PC-9 (cell line): ENCODE measurements at regions of chr2 and their contacts with region 1.

Region 1: GRCh38 chr2:172131713-172132555 is 29.2 kb upstream of the DLX2 start:
- DNase-seq: no peak
- H3K4me3 ChIP-seq: no peak overlapping the region
- H3K27ac ChIP-seq: no peak overlapping the region
- H3K4me1 ChIP-seq: no peaks in the 10 kb centered on the region
- H3K27me3 ChIP-seq: no peaks in the 10 kb centered on the region
- CTCF ChIP-seq: no peak

Region 2: GRCh38 chr2:171598713-171599319 is 533.1 kb before region 1 on chr2:
- CTCF ChIA-PET with region 1: no interaction called
- POLR2A ChIA-PET with region 1: no interaction called
- intact Hi-C with region 1: loop called (anchors 1 kb)
- DNase-seq: peak; percentile 47 to 63
- H3K4me3 ChIP-seq: no peak overlapping the region
- H3K27ac ChIP-seq: no peak overlapping the region
- H3K4me1 ChIP-seq: no peaks in the 10 kb centered on the region
- H3K27me3 ChIP-seq: peaks cover 17% of the 10 kb centered on the region; the same call in 1 of the 2 replicates
- CTCF ChIP-seq: peak; percentile 100

Region 3: GRCh38 chr2:171615069-171615468 is 516.9 kb before region 1 on chr2:
- CTCF ChIA-PET with region 1: interaction called, 14 read pairs
- POLR2A ChIA-PET with region 1: no interaction called
- intact Hi-C with region 1: no loop called
- DNase-seq: no peak
- H3K4me3 ChIP-seq: no peak overlapping the region
- H3K27ac ChIP-seq: no peak overlapping the region
- H3K4me1 ChIP-seq: no peaks in the 10 kb centered on the region
- H3K27me3 ChIP-seq: peaks cover 25% of the 10 kb centered on the region; the same call in 1 of the 2 replicates
- CTCF ChIP-seq: no peak

Region 4: GRCh38 chr2:171703574-171704347 is 428.2 kb before region 1 on chr2:
- CTCF ChIA-PET with region 1: interaction called, 8 read pairs
- POLR2A ChIA-PET with region 1: no interaction called
- intact Hi-C with region 1: loop called (anchors 1 kb)
- DNase-seq: peak; percentile 10 to 59
- H3K4me3 ChIP-seq: no peak overlapping the region
- H3K27ac ChIP-seq: peak overlapping the region; percentile 18; the same call in 1 of the 2 replicates
- H3K4me1 ChIP-seq: no peaks in the 10 kb centered on the region
- H3K27me3 ChIP-seq: no peaks in the 10 kb centered on the region
- CTCF ChIP-seq: peak; percentile 85

Region 5: DNA sequence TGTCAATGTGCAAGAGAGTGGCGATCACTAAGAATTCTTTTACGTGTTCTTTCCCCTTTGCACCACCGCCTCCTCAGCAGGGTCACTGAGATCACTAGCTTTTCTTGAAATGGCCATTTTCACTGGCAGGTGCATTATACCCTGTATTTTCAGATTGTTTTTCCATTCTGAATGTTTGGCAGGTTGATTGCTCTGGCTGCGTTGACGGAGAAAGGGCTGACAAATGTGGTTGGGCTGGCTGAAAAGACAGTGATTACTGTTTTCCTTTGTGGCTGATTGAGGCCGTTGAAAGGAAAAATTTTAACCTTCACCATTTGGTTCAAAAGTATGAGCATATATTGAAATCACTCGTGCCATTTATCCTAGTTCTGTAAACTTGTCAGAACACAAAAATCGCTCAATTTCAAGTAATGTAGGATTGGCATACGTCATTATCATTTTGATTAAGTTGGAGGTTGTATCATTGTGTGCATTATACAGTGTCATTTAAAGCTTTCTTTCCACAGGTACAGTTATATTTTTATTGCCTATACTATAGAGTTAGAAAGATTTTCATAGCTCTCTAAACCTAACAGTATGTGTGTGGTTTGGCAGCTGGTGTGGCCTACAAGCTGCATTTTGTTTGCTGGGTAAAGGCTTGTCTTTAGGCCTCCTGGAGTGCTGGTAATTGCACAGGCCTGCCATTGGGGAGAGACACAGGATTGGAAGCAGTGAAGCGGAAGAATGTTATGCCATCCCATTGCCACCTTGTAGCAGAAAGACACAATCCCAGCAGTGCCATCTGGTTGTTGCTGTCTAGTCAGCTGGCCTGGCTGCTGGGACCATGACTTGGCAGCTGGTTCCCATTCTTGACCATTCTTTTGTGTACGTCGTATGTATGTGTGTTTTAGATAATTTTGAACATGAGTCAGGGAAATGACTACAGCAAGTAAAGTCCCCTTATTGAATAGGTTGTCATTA is 407.9 kb before region 1 on chr2:
- CTCF ChIA-PET with region 1: no interaction called
- POLR2A ChIA-PET with region 1: no interaction called
- intact Hi-C with region 1: loop called (anchors 5 kb)
- DNase-seq: no peak
- H3K4me3 ChIP-seq: no peak overlapping the region
- H3K27ac ChIP-seq: no peak overlapping the region
- H3K4me1 ChIP-seq: no peaks in the 10 kb centered on the region
- H3K27me3 ChIP-seq: no peaks in the 10 kb centered on the region
- CTCF ChIP-seq: no peak

Region 6: DNA sequence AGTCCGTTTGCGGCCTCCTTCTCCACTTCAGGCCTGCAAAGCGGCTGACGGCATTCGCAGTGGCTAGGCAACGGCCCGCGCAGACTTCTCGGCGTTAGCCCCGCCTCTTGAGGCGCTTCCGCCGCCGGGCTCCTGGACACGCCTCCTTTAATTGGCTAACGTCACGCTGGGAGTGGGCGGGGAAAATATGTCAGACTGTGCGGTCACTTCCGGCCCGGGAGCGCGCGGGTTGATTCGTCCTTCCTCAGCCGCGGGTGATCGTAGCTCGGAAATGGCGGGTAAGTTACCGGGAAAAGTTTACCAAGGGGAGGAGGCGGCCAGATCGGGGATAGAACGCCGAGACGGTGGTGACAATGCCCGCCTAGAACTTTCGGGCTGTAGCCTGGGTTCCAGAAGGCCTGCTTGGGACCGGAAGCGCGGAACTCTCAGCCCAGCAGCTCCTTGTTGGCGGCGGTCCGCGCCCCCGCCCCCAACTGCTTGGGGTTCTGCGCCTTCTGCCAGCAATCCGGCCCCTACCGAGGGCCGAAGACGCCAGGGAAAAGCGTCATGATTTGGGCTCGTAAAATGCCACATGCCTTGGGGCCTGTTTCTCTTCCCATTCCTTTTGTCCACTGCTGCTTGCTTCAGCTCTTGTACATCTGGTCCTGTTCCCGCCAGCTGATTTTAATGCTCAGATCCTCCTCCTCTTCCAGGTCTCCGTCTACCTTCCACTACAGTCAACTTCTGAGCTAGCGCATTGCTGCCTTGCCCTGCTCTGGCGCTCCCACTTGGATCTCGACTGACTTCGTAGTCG is 209.5 kb before region 1 on chr2 and contains the start of gene HAT1:
- CTCF ChIA-PET with region 1: no interaction called
- POLR2A ChIA-PET with region 1: no interaction called
- intact Hi-C with region 1: loop called (anchors 1 kb)
- DNase-seq: peak; percentile 98 to 100
- H3K4me3 ChIP-seq: peak within 1 kb of the TSS; percentile 68
- H3K27ac ChIP-seq: peak within 1 kb of the TSS; percentile 52
- H3K4me1 ChIP-seq: peaks cover 25% of the 10 kb centered on the region
- H3K27me3 ChIP-seq: no peaks in the 10 kb centered on the region
- CTCF ChIP-seq: no peak
- total RNA-seq, gene HAT1: 96.4 and 132 TPM in 2 replicates

Region 7: DNA sequence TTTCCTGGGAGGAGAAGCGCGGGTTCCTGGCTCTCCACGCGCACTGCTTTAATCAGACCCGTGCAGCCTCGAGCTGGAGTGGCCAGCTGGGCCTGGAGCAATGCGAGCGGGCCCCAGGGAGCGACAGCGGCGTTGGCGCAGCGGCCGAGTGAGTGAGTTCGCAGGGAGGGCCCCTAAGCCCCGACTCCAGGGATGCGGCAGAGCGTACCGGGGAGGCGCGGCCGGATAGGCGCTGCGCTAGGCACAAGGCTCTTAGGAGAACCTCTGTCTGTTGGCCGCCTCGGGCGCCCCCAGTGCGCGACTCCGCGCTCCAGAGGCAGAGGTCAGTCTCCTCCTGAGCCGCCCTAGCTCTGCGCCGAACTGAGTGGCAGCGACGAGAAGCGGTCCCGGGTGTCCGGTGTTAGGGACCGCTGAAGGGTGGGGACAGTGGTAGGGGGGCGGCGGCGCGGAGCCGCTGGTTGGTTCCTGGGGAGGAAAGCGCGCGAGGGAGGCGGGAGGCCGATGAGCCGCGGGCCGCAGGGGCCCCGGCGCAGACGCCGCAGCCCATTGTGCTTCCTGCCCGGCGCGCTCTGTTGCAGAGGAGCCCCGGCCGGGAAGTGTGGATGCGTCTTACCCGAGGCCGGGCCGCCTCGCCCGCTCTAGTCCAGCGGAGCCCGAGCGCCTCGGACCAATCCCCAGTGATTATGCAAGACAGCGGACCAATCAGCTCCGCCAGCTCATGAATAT is 47.0 kb before region 1 on chr2:
- CTCF ChIA-PET with region 1: no interaction called
- POLR2A ChIA-PET with region 1: no interaction called
- intact Hi-C with region 1: no loop called
- DNase-seq: peak; percentile 70 to 71
- H3K4me3 ChIP-seq: peak overlapping the region; percentile 37; the same call in 1 of the 2 replicates
- H3K27ac ChIP-seq: no peak overlapping the region
- H3K4me1 ChIP-seq: 0 out of 2 replicates have a peak, but pooled peaks cover 4% of the 10 kb centered on the region
- H3K27me3 ChIP-seq: no peaks in the 10 kb centered on the region
- CTCF ChIP-seq: no peak

Region 8: GRCh38 chr2:172162739-172163336 is 30.9 kb after region 1 on chr2:
- CTCF ChIA-PET with region 1: interaction called, 17 read pairs
- POLR2A ChIA-PET with region 1: no interaction called
- intact Hi-C with region 1: no loop called
- DNase-seq: no peak
- H3K4me3 ChIP-seq: no peak overlapping the region
- H3K27ac ChIP-seq: no peak overlapping the region
- H3K4me1 ChIP-seq: no peaks in the 10 kb centered on the region
- H3K27me3 ChIP-seq: no peaks in the 10 kb centered on the region
- CTCF ChIP-seq: no peak

Region 9: DNA sequence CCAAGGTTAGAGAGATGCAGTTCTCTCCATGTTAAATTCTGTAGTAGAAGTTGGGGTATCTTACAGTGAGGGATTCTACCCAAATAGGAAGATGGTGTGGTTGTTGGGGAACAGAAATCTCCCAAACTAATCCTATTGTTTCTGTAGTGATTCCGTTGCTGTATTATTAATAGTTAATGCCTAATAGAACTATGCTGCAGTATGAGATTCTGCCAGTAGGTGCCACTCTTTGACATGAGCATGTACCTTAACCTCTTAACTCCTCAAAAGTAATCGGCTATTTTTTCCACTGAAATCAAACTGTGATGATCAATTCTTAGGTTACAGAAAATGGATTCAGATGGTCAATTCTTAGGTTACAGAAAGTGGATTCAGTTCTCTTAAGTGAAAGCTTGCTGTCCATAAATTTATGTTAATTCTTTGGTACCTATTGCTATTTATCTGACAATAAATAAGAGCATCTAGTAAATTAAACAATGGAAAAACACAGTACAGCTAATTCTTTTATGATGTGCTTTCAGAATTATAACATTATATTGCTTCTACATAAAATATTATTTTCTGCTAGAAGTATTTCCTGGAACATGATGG is 68.7 kb after region 1 on chr2:
- CTCF ChIA-PET with region 1: no interaction called
- POLR2A ChIA-PET with region 1: no interaction called
- intact Hi-C with region 1: no loop called
- DNase-seq: no peak
- H3K4me3 ChIP-seq: no peak overlapping the region
- H3K27ac ChIP-seq: no peak overlapping the region
- H3K4me1 ChIP-seq: peaks cover 8% of the 10 kb centered on the region
- H3K27me3 ChIP-seq: no peaks in the 10 kb centered on the region
- CTCF ChIP-seq: peak; percentile 84

Region 10: DNA sequence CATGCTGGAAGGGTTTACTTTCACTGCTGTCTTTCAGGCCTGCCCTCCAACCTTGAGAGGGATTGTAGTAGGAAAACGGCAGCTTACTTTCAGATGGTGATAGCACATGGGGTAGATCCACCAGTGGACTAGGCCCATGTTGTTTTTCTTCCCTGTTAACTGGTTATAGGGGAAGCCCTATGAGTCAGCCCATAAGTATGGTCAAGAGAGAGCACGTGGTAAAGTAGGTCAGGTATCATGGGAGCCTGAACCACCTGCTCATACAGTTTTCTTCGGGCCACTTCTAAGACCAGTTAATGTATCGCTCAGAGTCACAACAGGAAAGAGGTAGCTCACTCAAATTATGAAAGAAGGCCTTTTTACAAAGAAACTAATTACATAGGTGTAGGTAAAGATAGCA is 457.0 kb after region 1 on chr2:
- CTCF ChIA-PET with region 1: no interaction called
- POLR2A ChIA-PET with region 1: no interaction called
- intact Hi-C with region 1: no loop called
- DNase-seq: peak in 1 of 2 experiments; percentile 73
- H3K4me3 ChIP-seq: no peak overlapping the region
- H3K27ac ChIP-seq: 0 out of 2 replicates have a peak overlapping the region, but pooled peaks have one; percentile 1
- H3K4me1 ChIP-seq: peaks cover 13% of the 10 kb centered on the region
- H3K27me3 ChIP-seq: no peaks in the 10 kb centered on the region
- CTCF ChIP-seq: no peak